ENCODE measurements at regions of chr20 and their contacts with region 1.

Region 1: GRCh38 chr20:51631011-51631950 is 88.8 kb upstream of the NFATC2 start:
- DNase-seq: peak; percentile 100
- H3K4me3 ChIP-seq: no peak overlapping the region
- H3K27ac ChIP-seq: peak overlapping the region; percentile 99
- H3K4me1 ChIP-seq: peaks cover 38% of the 10 kb centered on the region
- H3K27me3 ChIP-seq: no peaks in the 10 kb centered on the region
- CTCF ChIP-seq: no peak
- POLR2A ChIP-seq: peak; percentile 55

Region 2: GRCh38 chr20:51360451-51361221 is 270.6 kb before region 1 on chr20:
- CTCF ChIA-PET with region 1: interaction called, 3 read pairs
- POLR2A ChIA-PET with region 1: no interaction called
- dilution Hi-C with region 1: no loop called
- intact Hi-C with region 1: loop called (anchors 1 kb)
- DNase-seq: peak; percentile 98
- H3K4me3 ChIP-seq: no peak overlapping the region
- H3K27ac ChIP-seq: peak overlapping the region; percentile 85
- H3K4me1 ChIP-seq: peaks cover 33% of the 10 kb centered on the region
- H3K27me3 ChIP-seq: no peaks in the 10 kb centered on the region
- CTCF ChIP-seq: no peak
- POLR2A ChIP-seq: no peak

Region 3: DNA sequence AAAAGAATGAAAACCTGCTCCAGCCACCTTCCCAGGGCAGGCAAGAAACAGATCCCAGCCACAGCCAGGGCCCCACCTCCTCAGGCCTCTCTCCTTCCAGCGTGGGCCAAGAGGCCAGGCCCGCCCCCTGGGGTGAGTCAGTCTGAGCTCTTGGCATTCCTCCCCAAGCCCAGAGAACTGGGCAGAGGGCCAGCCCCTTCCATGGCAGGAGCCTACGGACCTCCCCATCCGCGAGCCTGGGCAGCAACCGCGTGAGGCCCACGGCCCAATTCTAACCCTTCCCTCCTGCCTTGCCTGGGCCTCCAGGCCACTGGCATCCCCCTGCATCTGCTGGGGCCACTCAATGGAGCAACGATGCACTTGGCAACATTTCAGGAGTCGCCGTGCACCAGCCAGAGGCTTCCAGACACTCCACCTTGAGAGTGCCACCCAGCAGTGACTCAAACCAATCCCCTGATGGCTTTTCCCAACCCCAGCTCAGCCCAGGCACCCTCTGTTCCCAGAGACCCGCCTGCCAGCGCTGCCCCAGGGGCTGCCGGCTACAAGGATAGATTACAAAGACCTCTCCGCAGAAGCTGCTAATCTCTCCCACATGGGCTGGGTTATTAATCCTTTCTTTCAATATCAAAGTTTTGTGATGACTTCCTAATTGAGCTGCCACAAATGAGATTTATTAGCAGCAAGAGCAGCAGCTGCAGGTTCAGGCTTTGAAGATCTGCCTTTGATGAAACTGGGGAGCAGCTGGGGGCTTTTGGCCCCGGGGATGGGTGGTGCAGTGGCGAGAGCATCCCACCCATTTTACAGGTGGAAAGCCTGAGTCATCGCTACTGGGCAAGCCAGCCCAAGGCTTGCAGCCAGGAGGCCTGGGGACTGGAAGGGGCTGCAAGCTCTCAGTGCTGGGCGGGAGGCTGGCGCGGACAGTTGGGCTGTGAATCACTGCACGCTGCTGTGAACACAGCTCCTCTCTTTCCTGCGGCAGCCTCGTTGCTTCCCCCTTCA is 174.5 kb before region 1 on chr20:
- CTCF ChIA-PET with region 1: no interaction called
- POLR2A ChIA-PET with region 1: no interaction called
- dilution Hi-C with region 1: no loop called
- intact Hi-C with region 1: loop called (anchors 1 kb)
- DNase-seq: peak; percentile 99
- H3K4me3 ChIP-seq: no peak overlapping the region
- H3K27ac ChIP-seq: peak overlapping the region; percentile 71
- H3K4me1 ChIP-seq: peaks cover 15% of the 10 kb centered on the region
- H3K27me3 ChIP-seq: no peaks in the 10 kb centered on the region
- CTCF ChIP-seq: no peak
- POLR2A ChIP-seq: no peak

Region 4: DNA sequence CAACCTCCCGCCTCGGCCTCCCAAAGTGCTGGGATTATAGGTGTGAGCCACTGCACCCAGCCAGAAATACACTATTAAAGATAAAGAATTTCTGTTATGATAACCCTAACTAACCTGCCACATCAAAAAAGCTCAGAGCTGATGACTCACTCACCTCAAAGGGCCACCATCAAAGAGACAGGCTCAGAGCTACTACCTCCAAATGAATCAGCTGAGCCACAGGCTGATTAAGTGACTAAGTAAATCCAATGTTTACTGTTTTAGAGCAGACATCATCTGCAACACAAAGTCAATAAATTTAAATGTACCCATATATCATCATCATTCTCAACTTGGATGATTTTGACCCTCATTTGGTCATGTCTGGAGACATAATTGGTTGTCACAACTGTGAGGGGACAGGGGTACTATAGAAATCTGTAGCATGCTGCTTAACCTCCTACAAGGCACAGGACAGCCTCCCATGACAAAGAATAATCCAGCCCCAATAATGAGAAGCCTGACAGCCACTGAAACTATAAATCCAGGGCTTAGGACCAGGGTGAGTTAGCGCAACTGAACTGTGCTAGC is 30.4 kb after region 1 on chr20:
- CTCF ChIA-PET with region 1: interaction called, 3 read pairs
- POLR2A ChIA-PET with region 1: no interaction called
- dilution Hi-C with region 1: no loop called
- intact Hi-C with region 1: loop called (anchors 1 kb)
- DNase-seq: peak; percentile 79
- H3K4me3 ChIP-seq: no peak overlapping the region
- H3K27ac ChIP-seq: peak overlapping the region; percentile 98
- H3K4me1 ChIP-seq: peaks cover 32% of the 10 kb centered on the region
- H3K27me3 ChIP-seq: no peaks in the 10 kb centered on the region
- CTCF ChIP-seq: no peak
- POLR2A ChIP-seq: no peak

Region 5: GRCh38 chr20:51984931-51985415 is 353.7 kb after region 1 on chr20:
- CTCF ChIA-PET with region 1: interaction called, 3 read pairs
- POLR2A ChIA-PET with region 1: no interaction called
- dilution Hi-C with region 1: no loop called
- intact Hi-C with region 1: loop called (anchors 2 kb)
- DNase-seq: peak; percentile 96
- H3K4me3 ChIP-seq: no peak overlapping the region
- H3K27ac ChIP-seq: peak overlapping the region; percentile 82
- H3K4me1 ChIP-seq: peaks cover 13% of the 10 kb centered on the region
- H3K27me3 ChIP-seq: no peaks in the 10 kb centered on the region
- CTCF ChIP-seq: no peak
- POLR2A ChIP-seq: no peak

Region 6: DNA sequence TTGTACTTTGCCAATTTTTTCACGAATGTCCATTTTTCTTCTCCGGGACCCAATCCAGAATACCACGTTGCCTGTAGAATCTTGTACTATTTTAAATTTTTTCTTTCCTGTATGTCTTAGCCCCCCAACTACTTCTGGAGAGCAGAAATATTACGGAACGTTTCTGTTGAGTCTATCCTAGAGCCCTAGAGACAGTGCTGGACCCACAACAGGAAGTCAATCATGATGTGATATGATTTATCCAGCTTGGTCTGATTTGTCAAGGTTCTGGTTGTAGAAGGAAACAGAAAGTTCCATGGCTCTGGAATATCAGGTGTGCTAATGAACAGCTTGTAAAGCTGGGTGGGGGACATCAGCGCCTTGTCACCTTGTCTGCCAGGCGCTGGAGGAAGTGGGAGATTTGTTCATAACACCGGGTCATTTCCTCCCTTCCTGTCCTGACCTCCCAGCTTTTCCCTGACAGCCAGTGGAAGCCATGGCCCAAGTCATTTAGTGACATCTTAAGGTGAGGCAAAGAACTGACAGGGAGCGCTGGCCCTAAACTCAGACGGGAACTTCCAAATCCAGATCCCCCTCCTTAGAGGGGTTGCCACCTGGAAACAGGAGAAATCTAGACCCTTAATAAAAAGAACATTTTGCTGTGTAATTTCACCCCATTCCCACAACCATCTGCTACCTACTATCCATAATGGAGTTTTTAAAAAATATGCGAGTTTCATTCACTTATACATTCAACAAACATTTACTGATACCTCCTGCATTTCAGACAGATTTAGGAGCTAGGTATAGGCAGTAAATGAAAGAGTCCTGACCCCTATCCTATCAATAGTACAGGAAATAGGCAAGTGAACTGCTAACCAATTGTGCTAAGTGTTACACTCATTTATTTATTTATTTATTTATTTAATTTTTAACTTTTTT is 429.8 kb after region 1 on chr20:
- CTCF ChIA-PET with region 1: no interaction called
- POLR2A ChIA-PET with region 1: no interaction called
- dilution Hi-C with region 1: no loop called
- intact Hi-C with region 1: loop called (anchors 2 kb)
- DNase-seq: peak; percentile 82
- H3K4me3 ChIP-seq: no peak overlapping the region
- H3K27ac ChIP-seq: peak overlapping the region; percentile 62
- H3K4me1 ChIP-seq: peaks cover 9% of the 10 kb centered on the region
- H3K27me3 ChIP-seq: no peaks in the 10 kb centered on the region
- CTCF ChIP-seq: peak; percentile 50 to 55
- POLR2A ChIP-seq: no peak